OCI-LY7 (cell line): ENCODE measurements at regions of chr9 and their contacts with region 1.

Region 1: GRCh38 chr9:69861005-69861404 is 40.4 kb downstream of the CFAP95 start:
- DNase-seq: no peak
- H3K4me3 ChIP-seq: no peak overlapping the region
- H3K27ac ChIP-seq: no peak overlapping the region
- H3K4me1 ChIP-seq: no peaks in the 10 kb centered on the region
- CTCF ChIP-seq: no peak

Region 2: DNA sequence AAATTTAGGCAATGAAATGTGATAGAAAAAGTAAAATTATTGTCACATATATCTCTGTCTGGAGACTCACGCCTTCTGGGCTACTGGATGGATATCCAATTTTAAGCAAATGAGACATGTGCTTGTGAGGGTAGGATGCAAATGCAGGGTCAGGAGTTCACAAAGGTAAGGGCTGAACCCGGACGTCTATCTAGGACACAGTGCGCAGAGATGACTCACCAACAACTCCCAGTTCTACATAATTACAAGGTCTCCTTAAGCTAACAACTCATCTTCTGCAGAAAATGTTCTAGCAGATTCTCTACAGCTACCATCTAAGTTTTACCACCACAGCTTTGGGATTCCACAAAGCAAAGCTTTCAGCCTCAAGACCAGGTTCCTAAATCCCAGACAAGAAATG is 375.5 kb before region 1 on chr9:
- CTCF ChIA-PET with region 1: no interaction called
- POLR2A ChIA-PET with region 1: no interaction called
- intact Hi-C with region 1: no loop called
- DNase-seq: no peak
- H3K4me3 ChIP-seq: no peak overlapping the region
- H3K27ac ChIP-seq: no peak overlapping the region
- H3K4me1 ChIP-seq: no peaks in the 10 kb centered on the region
- CTCF ChIP-seq: no peak

Region 3: DNA sequence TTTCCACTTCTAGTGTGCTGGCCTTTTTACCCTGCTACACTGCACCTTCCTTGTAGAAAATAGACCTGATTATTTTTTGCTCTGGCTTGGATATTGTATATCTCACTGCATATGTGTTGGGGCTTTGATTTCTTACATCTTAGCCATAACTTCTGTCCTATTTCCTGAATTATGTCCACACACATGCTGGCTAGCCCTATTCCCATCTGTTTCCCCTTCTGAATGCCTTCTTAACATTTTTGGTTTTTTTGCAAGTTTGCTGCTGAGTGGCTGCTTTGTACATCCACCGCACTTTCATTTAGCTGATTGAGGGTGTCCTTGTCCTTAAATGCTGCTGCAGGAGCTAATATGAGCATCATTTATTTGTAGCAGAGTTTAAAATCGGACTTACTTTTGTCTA is 13.5 kb before region 1 on chr9:
- CTCF ChIA-PET with region 1: no interaction called
- POLR2A ChIA-PET with region 1: no interaction called
- intact Hi-C with region 1: no loop called
- DNase-seq: no peak
- H3K4me3 ChIP-seq: no peak overlapping the region
- H3K27ac ChIP-seq: no peak overlapping the region
- H3K4me1 ChIP-seq: no peaks in the 10 kb centered on the region
- CTCF ChIP-seq: no peak

Region 4: DNA sequence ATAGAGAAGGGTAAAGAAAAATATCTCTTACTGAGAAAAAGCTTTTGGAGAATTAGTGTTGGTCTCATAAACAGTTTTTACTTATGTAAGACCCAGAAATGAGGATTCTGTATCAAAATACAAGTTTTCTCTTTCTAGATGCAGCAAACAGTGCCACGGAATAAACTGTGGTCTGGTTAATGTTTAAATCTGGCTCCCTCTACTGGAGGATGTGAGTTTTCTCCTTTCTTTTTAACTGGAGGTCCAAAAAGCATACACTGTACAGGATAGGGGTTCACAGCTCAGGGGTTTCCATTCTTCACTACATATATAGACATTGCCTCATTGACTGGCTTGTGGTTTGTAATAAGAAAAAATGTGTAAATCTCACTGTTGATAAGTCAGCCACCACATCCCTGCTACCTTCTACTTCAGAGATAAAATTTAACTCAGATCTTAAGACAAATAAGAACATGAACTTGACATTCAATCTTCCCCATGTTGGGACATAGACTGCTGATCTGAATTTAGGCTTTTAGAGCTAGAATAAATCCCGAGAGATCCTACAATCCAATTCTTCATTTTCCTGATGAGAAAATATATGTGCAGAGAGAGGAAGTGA is 58.6 kb after region 1 on chr9:
- CTCF ChIA-PET with region 1: no interaction called
- POLR2A ChIA-PET with region 1: interaction called, 12 read pairs
- intact Hi-C with region 1: no loop called
- DNase-seq: peak; percentile 54
- H3K4me3 ChIP-seq: no peak overlapping the region
- H3K27ac ChIP-seq: no peak overlapping the region
- H3K4me1 ChIP-seq: no peaks in the 10 kb centered on the region
- CTCF ChIP-seq: peak; percentile 87